Activated B cell treated with CpG ODN at 0.5 μM for 24 hours (primary cell): ENCODE measurements at regions of chr7 and their contacts with region 1.

Region 1: GRCh38 chr7:102306875-102307677 is 20.4 kb downstream of the SH2B2 start:
- DNase-seq: peak; percentile 80
- ATAC-seq: peak; percentile 88
- H3K4me3 Mint-ChIP-seq: peak overlapping the region; percentile 74
- H3K27ac Mint-ChIP-seq: peak overlapping the region; percentile 92
- H3K4me1 Mint-ChIP-seq: peaks cover 85% of the 10 kb centered on the region
- H3K27me3 Mint-ChIP-seq: no peaks in the 10 kb centered on the region
- CTCF ChIP-seq: no peak

Region 2: GRCh38 chr7:102286237-102287110 is 20.6 kb before region 1 on chr7 and contains the start of gene SH2B2:
- CTCF ChIA-PET with region 1: interaction called, 10 read pairs
- POLR2A ChIA-PET with region 1: interaction called, 180 read pairs
- intact Hi-C with region 1: loop called (anchors 1 kb)
- DNase-seq: peak; percentile 83
- ATAC-seq: peak; percentile 38
- H3K4me3 Mint-ChIP-seq: peak within 1 kb of the TSS; percentile 83
- H3K27ac Mint-ChIP-seq: peak within 1 kb of the TSS; percentile 53
- H3K4me1 Mint-ChIP-seq: peaks cover 64% of the 10 kb centered on the region
- H3K27me3 Mint-ChIP-seq: no peaks in the 10 kb centered on the region
- CTCF ChIP-seq: no peak
- total RNA-seq, gene SH2B2: 28.2 and 32.1 TPM in 2 replicates

Region 3: DNA sequence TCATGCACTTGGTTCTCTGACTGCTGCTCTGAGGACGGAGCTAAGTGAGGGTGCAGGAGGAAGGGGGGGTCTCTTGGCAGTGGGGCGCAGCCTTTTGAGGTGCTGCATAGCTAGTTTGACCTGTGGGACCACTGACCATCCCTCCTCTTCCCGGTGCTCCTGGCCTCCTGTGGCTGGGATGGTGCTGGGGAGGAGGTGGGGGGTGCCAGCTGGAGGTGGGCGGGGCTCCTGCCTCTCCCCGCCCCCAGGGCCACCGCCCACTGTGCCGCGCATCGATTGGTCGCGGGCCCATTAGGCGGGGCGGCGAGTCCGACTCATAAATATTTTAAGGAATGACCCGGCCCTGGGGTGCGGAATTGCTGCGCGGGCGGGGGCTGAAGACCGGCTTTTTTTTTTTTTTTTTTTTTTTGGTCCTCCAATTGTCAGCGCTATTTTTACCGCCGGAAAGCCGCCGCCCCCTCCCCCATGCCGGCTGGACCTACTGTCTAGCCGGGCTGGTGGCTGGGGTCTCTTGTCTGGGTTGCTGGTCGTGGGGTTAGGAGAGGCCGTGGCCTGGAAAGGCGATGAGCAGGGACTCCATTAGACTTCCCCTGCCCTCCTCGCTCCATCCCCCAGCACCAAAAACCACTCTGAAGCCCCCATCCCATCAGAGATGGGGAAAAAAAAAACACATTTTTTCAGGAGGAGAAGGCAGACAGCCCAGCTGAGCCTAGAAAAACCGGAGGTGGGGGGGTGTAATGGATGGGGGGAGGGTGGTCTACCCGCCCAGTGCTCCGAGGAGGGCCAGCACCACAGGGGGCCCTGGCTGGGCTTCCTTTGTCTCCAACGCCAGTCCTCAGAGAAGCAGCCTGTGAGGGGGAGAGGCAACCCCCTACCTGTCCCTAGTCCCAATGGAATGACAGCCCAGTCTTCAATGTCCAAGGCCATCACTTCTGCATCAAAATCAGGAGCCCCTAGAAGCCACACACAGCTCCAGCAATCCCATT is 14.0 kb before region 1 on chr7:
- CTCF ChIA-PET with region 1: interaction called, 10 read pairs
- POLR2A ChIA-PET with region 1: interaction called, 180 read pairs
- intact Hi-C with region 1: loop called (anchors 1 kb)
- DNase-seq: no peak
- ATAC-seq: no peak
- H3K4me3 Mint-ChIP-seq: no peak overlapping the region
- H3K27ac Mint-ChIP-seq: peak overlapping the region; percentile 56
- H3K4me1 Mint-ChIP-seq: peaks cover 94% of the 10 kb centered on the region
- H3K27me3 Mint-ChIP-seq: no peaks in the 10 kb centered on the region
- CTCF ChIP-seq: no peak

Region 4: DNA sequence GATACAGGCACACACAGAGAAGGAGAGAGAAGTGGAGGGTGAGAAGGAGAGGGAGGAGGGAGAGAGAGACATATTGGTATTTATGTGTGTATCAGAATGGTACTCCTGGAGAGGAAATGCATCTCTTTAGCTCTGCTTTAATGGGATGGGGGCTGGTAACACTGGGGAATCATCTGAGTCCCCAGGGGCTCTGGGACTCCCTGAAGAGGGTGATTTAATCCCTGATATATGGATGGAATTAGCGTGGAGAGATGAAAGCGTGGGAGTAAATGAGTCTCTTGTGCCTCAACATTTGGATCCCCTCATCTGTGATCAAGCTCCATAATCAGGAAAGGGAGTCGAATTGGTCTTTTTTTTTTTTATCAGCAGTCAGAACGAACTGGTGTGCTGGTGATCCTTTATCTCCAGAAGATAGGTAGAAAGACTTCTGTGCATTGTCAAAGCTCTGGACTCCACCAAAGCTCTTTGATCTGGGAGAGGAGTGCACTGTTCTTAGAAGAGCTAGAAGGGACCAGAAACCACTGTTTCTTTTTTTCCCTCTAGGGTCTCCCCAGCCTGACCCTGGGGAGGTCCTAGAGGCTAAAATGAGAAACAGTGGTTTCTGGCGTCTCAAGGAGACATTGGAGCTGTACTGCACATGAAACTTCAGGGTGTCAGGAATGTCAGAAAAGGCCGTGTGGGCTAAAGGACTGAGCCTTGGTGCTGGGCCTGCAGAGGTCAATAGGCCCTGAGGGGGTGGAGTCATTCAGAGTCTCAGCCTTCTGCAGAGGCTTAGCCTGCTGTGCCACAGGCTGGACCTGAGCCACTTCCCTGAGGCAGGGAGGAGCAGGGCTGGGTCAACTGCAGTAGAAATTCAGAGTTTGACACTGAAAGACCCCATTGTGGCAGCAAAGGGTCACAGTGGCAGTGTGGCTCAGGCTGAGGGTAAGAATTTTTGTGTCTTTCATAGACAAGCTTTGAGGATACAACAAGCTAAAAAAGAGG is 1373.4 kb after region 1 on chr7:
- CTCF ChIA-PET with region 1: no interaction called
- POLR2A ChIA-PET with region 1: no interaction called
- intact Hi-C with region 1: no loop called
- DNase-seq: no peak
- ATAC-seq: no peak
- H3K4me3 Mint-ChIP-seq: no peak overlapping the region
- H3K27ac Mint-ChIP-seq: no peak overlapping the region
- H3K4me1 Mint-ChIP-seq: no peaks in the 10 kb centered on the region
- H3K27me3 Mint-ChIP-seq: no peaks in the 10 kb centered on the region
- CTCF ChIP-seq: no peak